Lower leg skin (tissue), 4 donors: ENCODE measurements at regions of chr10 and their contacts with region 1.

Region 1: DNA sequence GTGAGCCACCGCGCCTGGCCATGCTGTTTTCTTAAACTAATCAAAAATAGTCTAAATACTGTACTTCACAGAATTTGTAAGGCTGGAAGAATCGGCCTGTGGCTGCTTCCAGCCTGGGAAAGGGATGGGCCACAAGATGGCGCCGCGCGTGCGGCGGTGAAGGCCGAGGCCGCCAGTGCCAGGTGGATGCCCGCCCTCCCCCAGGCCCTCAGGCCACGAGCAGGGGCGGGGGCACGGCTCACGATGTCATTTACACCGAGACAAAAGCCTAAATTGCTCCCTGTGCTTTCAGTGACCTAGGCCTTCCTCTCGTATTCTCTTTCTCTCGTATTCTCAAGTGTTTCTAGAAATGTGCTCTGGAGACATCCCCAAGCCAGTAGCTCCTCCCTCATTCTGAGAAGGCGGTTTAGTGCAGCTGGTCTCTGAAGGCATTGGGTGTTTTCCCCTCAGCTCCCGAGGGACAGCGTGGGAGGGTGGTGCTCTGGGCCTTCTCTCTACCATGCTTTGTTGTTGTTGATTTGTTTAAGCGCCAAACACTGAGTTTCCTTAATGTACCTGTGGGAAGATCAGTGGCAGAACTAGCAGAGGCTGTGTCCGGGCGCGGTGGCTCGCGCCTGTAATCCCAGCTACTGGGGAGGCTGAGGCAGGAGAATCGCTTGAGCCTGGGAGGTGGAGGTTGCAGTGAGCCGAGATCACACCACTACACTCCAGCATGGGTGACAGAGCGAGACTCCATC is 68.4 kb downstream of the CDC123 start:
- DNase-seq: peak; percentile 62 to 95
- H3K4me3 ChIP-seq: no peak overlapping the region
- CTCF ChIP-seq: peak in 1 of 3 donors; percentile 38
- POLR2A ChIP-seq: no peak

Region 2: DNA sequence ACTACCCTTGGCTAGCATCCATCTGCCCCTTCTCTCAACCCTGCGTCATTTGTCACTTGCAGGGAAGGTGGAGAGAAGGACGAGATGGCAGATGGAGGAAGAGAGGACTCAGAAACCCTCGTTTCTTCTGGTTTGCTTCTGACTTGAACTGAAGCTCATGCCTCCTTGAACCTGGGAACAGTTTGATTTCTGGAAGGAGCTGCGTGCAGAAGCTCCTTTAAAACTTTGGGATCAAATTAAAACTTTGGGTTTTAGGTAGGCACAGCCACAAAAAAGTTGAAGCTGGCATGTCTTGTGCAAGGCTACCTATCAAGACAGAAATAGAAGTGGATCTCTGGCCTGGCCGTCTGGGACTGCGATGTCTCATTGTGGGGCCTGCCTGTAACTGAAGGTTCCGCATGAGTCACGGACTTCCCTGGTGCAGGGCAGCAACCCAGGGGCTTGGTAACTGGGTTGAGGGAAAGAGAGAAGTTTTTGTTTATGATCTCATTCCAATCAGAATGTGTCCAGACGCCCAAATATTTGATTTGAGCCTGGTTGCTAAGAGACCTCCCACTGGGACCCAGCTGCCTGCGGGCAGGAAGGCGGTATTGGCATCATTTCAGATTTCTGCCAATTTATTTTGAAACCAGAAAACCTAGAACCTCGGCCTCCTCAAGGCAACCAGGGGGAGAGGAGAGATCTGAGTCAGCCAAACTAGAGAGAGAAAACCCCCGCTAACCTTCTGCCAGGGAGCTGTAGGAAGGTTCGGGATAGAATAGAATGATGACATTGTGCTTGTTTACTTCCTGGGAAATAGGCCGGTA is 69.2 kb after region 1 on chr10:
- intact Hi-C with region 1: no loop called
- DNase-seq: peak; percentile 71 to 93
- H3K4me3 ChIP-seq: no peak overlapping the region
- CTCF ChIP-seq: no peak
- POLR2A ChIP-seq: no peak

Region 3: GRCh38 chr10:12656518-12657142 is 392.3 kb after region 1 on chr10:
- intact Hi-C with region 1: loop called (anchors 5 kb)
- DNase-seq: no peak
- H3K4me3 ChIP-seq: no peak overlapping the region
- CTCF ChIP-seq: no peak
- POLR2A ChIP-seq: no peak

Region 4: GRCh38 chr10:12707461-12708185 is 443.3 kb after region 1 on chr10:
- intact Hi-C with region 1: loop called (anchors 10 kb)
- DNase-seq: no peak
- H3K4me3 ChIP-seq: no peak overlapping the region
- CTCF ChIP-seq: no peak
- POLR2A ChIP-seq: no peak

Region 5: DNA sequence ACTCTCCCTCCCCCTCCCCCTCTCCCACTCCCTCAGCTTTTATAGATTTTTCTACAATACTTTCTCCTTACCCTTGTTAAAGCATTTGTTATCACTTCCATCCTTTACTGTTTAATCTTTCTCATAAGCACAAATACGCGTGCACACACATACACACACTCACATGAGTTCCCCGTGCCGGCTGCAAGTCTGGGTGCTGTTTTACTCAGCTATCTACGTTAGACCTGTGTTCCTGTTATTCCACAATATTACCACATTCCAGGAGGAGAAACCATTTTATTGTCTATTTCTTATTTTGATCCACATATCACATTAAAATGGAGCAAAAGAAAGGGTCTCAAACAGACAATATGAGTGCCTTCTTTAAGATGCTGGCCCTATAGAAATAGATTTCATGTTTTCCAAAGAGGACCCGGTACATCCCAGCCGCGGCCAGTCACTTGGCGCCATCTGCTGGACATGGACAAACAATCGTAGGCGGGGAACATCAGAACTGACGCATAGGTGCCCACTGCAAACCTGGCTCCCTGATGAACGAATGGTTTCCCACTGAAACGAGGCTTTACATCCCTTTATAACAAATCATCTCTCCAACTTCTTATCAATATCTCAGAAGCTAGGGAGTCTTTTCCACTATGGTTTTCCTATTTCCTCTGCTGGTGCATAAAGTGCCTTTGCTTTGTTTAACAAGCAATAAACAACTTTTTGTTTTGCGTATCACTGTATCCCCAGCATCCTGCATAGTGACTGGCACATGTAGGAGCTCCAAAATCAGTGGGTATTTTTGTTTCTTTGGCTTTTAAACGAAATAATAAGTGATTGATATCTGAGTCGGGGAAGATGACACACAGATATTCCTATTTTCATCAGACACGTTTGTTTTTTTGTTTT is 810.4 kb after region 1 on chr10:
- intact Hi-C with region 1: loop called (anchors 5 kb)
- DNase-seq: peak; percentile 54 to 91
- H3K4me3 ChIP-seq: no peak overlapping the region
- CTCF ChIP-seq: peak in 1 of 3 donors; percentile 7
- POLR2A ChIP-seq: no peak